ENCODE measurements at regions of chr7 and their contacts with region 1.

Region 1: DNA sequence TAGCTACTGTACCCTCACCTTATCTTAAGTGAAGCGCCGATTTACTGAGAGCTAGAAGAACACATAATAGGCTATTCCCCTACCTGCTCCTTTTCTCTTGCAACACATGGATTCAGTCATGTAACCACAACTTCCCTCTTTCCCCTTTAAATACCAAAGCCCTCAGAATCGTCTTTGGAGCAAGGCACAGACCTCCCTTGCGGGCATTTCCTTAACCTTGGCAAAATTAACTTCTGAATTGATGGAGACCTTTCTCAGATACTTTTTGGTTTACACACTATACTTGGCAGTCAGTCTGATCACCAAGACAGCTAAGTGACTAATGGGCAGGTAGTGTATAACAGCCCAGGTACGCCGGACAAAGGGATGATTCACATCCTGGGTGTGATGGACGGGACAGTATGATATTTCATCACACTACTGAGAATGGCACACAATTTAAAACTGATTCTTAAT is 72.7 kb upstream of the SEC61G start:
- DNase-seq: peak; percentile 86 to 100
- H3K4me3 ChIP-seq: peak overlapping the region; percentile 39; the same call in 1 of the 2 replicates
- H3K27ac ChIP-seq: peak overlapping the region; percentile 94
- H3K4me1 ChIP-seq: peaks cover 45% of the 10 kb centered on the region
- H3K27me3 ChIP-seq: no peaks in the 10 kb centered on the region
- CTCF ChIP-seq: no peak; the same call in none of the 2 replicates

Region 2: DNA sequence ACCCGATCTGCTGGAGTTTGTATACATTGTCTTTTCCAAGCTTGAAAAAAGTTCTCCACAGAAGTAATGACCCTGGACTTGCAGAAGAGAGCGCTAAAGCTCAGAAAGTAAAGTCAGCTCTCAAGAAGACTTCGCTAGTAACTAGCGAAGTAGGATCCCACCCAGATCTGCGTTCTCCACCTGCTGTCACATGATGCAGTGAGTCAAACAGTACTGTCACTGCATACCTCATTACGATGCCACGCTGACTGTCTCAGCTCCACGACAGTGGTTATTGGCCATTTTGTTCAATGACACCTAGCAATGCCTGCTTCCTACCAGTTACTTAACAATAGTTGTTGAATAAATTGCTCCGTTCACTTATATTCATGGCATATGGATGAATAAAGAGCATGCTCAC is 43.0 kb before region 1 on chr7:
- CTCF ChIA-PET with region 1: interaction called, 3 read pairs
- POLR2A ChIA-PET with region 1: no interaction called
- intact Hi-C with region 1: loop called (anchors 1 kb)
- DNase-seq: peak; percentile 79 to 99
- H3K4me3 ChIP-seq: no peak overlapping the region
- H3K27ac ChIP-seq: peak overlapping the region; percentile 27
- H3K4me1 ChIP-seq: peaks cover 29% of the 10 kb centered on the region
- H3K27me3 ChIP-seq: no peaks in the 10 kb centered on the region
- CTCF ChIP-seq: peak; percentile 95

Region 3: DNA sequence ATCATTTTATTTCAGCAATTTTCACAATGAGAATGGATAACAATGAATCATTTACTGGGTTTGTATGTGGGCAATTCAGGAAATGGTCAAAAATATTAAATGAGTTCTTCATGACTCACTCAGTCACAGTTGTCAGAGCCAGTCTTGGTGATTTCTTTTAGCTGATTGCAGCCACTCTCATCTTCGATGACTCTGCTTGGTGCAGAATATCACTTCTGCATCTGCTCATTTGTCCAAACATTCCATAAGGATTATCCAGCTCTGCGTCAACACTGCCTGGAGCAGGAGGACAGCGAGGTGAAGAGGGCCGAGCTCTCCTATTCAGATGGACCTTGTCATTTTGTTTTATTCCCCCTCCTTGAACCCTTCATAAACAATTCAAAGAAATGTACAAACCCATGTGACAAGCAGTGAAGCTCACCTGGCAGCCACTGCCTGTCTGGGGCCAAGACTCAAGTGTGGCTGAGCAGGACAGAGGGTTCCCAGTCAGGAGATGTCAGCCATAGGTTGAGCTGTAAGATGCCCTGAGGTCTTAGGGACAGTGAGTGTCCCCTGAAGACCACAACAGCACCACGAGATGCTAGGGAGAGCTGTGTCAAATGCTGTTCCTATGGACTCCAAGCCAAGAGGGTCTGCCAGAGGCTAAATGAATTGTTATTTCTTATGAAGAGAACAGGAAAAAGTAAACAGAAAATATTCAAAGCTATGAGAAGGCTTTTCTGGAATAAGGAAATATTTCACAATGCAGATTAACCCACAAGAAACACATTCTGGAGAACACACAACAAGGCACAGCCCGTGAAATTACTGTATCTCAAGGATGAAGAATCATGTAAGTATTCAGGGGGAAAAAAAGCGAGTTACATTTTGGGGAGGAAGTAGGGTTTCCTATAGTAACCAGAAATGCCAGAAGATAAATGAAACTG is 154.0 kb after region 1 on chr7:
- CTCF ChIA-PET with region 1: no interaction called
- POLR2A ChIA-PET with region 1: interaction called, 14 read pairs
- intact Hi-C with region 1: no loop called
- DNase-seq: peak; percentile 75 to 100
- H3K4me3 ChIP-seq: peak overlapping the region; percentile 38; the same call in 1 of the 2 replicates
- H3K27ac ChIP-seq: peak overlapping the region; percentile 89
- H3K4me1 ChIP-seq: peaks cover 51% of the 10 kb centered on the region
- H3K27me3 ChIP-seq: no peaks in the 10 kb centered on the region
- CTCF ChIP-seq: no peak

Region 4: DNA sequence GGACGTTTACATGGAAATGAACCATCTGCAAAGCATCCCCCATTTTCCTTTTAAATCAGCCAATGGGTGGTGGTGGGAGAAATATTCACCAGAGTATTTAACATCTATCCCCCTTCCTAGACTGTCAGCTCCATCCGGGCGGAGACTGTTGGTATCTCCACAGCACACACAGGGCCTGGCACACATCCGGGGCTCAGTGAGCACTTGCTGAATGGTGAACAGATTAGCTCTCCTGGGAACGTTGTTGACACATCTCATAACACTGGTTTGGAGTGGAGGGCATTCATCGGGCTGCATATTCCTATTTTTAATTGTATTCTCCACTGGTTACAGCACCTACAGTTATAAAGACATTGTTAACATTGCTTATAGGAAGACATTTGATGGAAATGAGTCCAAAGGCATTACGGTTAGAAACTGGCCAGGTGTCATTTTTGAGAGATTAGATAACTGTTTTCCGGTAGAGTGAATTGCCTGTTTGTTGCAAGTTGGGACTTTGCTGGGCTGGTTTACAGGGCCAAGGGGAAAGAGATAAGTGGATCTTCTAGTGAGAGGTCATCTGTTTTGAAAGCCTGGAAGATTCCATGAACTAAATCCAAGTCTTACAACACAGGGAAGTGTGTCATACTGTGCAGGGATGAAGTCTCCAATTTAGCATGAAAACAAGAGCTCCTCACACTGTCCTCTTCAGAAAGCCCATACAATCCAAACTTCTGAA is 289.0 kb after region 1 on chr7:
- CTCF ChIA-PET with region 1: no interaction called
- POLR2A ChIA-PET with region 1: no interaction called
- intact Hi-C with region 1: loop called (anchors 1 kb)
- DNase-seq: peak; percentile 71 to 98
- H3K4me3 ChIP-seq: peak overlapping the region; percentile 3; the same call in 1 of the 2 replicates
- H3K27ac ChIP-seq: peak overlapping the region; percentile 79
- H3K4me1 ChIP-seq: peaks cover 77% of the 10 kb centered on the region
- H3K27me3 ChIP-seq: no peaks in the 10 kb centered on the region
- CTCF ChIP-seq: no peak

Region 5: GRCh38 chr7:55185941-55186609 is 354.4 kb after region 1 on chr7:
- CTCF ChIA-PET with region 1: no interaction called
- POLR2A ChIA-PET with region 1: no interaction called
- intact Hi-C with region 1: loop called (anchors 1 kb)
- DNase-seq: peak; percentile 97 to 99
- H3K4me3 ChIP-seq: no peak overlapping the region
- H3K27ac ChIP-seq: peak overlapping the region; percentile 51
- H3K4me1 ChIP-seq: peaks cover 27% of the 10 kb centered on the region
- H3K27me3 ChIP-seq: no peaks in the 10 kb centered on the region
- CTCF ChIP-seq: no peak

Region 6: DNA sequence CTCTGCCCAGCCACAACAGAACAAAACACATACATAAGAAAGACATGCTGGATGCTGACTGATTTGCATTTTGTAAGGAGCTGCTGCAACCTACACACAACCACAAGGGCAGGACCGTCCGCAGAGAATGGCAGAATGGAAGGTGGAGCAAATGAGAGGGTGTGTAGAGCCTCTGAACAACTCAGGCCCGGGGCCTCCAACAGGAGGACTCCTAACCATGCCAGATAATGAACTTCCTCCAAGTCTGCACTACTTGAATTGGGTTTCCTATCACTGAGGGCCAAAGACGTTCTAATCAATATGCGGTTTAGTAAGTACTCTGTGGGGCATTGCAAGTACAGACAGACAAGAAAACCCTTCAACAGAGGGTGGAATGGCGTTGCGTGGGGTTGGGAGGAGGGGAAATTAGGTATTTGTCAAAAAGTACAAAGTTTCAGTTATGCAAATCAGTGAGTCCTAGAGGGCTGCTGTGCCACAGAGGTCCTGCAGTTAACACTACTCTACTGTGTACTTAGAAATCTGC is 726.1 kb after region 1 on chr7:
- CTCF ChIA-PET with region 1: no interaction called
- POLR2A ChIA-PET with region 1: no interaction called
- intact Hi-C with region 1: loop called (anchors 2 kb)
- DNase-seq: no peak
- H3K4me3 ChIP-seq: no peak overlapping the region
- H3K27ac ChIP-seq: peak overlapping the region; percentile 82
- H3K4me1 ChIP-seq: peaks cover 81% of the 10 kb centered on the region
- H3K27me3 ChIP-seq: no peaks in the 10 kb centered on the region
- CTCF ChIP-seq: no peak

Measured in PC-9 (cell line).